Caco-2 (cell line): ENCODE measurements at regions of chr1 and their contacts with region 1.

Region 1: GRCh38 chr1:224106568-224107281 is 7.2 kb upstream of the FBXO28 start:
- DNase-seq: peak; percentile 53
- H3K4me3 ChIP-seq: peak overlapping the region; percentile 36
- H3K4me3 Mint-ChIP-seq: peak overlapping the region; percentile 56
- H3K27ac Mint-ChIP-seq: no peak overlapping the region
- H3K4me1 ChIP-seq: peaks cover 7% of the 10 kb centered on the region; the same call in 1 of the 2 replicates
- H3K4me1 Mint-ChIP-seq: no peaks in the 10 kb centered on the region
- H3K27me3 ChIP-seq: no peaks in the 10 kb centered on the region
- H3K27me3 Mint-ChIP-seq: no peaks in the 10 kb centered on the region
- CTCF ChIP-seq: peak; percentile 40 to 57

Region 2: DNA sequence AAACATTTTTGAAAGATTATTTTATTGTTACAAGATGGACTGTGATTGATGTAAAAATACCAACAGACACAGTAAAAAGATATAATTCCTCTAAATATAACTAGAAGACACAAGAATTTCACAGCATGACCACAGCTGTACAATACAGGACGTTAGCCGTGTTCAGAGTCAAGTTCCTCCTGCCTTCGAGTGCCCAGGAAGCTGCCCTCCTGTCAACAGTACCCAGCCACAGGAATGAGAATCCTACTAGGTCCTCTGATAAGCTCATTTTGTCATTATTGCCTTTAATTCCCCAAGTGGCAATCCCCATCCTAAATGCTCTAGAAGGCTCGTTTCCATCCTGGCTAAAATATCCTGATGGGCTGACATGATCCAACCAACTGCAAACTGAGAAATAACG is 410.8 kb before region 1 on chr1:
- CTCF ChIA-PET with region 1: interaction called, 4 read pairs
- POLR2A ChIA-PET with region 1: no interaction called
- intact Hi-C with region 1: loop called (anchors 5 kb)
- DNase-seq: no peak
- H3K4me3 ChIP-seq: no peak overlapping the region
- H3K4me3 Mint-ChIP-seq: no peak overlapping the region
- H3K27ac Mint-ChIP-seq: no peak overlapping the region
- H3K4me1 ChIP-seq: peaks cover 17% of the 10 kb centered on the region
- H3K4me1 Mint-ChIP-seq: peaks cover 17% of the 10 kb centered on the region
- H3K27me3 ChIP-seq: no peaks in the 10 kb centered on the region
- H3K27me3 Mint-ChIP-seq: no peaks in the 10 kb centered on the region
- CTCF ChIP-seq: no peak

Region 3: DNA sequence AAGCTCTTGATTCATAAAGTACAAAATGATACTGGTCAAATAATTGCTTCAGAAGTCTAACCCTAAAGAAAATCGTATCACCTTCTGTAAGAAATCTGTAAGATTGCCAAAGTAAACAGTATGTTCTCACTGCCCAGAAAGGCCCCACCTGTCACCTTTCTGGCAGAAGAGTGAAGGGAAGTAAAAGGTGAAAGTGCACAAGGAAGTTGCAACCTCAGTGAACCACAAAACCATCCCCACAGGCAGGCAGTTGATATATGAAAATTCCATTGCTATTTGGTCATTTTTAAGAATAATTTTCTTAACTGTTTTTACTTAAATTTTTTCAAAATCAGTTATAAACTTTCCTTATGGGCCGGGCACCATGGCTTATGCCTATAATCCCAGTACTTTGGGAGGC is 41.3 kb before region 1 on chr1:
- CTCF ChIA-PET with region 1: no interaction called
- POLR2A ChIA-PET with region 1: no interaction called
- intact Hi-C with region 1: loop called (anchors 2 kb)
- DNase-seq: peak; percentile 7 to 45
- H3K4me3 ChIP-seq: no peak overlapping the region
- H3K4me3 Mint-ChIP-seq: no peak overlapping the region
- H3K27ac Mint-ChIP-seq: no peak overlapping the region
- H3K4me1 ChIP-seq: peaks cover 33% of the 10 kb centered on the region
- H3K4me1 Mint-ChIP-seq: peaks cover 18% of the 10 kb centered on the region
- H3K27me3 ChIP-seq: no peaks in the 10 kb centered on the region
- H3K27me3 Mint-ChIP-seq: no peaks in the 10 kb centered on the region
- CTCF ChIP-seq: no peak